ENCODE measurements at regions of chr19 and their contacts with region 1.

Region 1: GRCh38 chr19:42283143-42284065 is 14.4 kb downstream of the CIC start:
- DNase-seq: peak; percentile 90 to 98 (median 97)
- ATAC-seq: peak; percentile 69
- H3K4me3 ChIP-seq: peak overlapping the region; percentile 40 to 59
- H3K4me3 Mint-ChIP-seq: no peak overlapping the region
- H3K27ac ChIP-seq: peak overlapping the region; percentile 85 to 94
- H3K27ac Mint-ChIP-seq: no peak overlapping the region
- H3K4me1 ChIP-seq: peaks cover 47% of the 10 kb centered on the region
- H3K4me1 Mint-ChIP-seq: peaks cover 48% of the 10 kb centered on the region
- H3K27me3 ChIP-seq: no peaks in the 10 kb centered on the region
- H3K27me3 Mint-ChIP-seq: no peaks in the 10 kb centered on the region
- CTCF ChIP-seq: no peak

Region 2: GRCh38 chr19:42176990-42177685 is 106.3 kb before region 1 on chr19:
- CTCF ChIA-PET with region 1: interaction called, 4 read pairs
- POLR2A ChIA-PET with region 1: no interaction called
- intact Hi-C with region 1: loop called (anchors 2 to 5 kb)
- DNase-seq: peak; percentile 52 to 90 (median 74)
- ATAC-seq: peak; percentile 95
- H3K4me3 ChIP-seq: peak overlapping the region; percentile 49 to 50
- H3K4me3 Mint-ChIP-seq: no peak overlapping the region
- H3K27ac ChIP-seq: no peak overlapping the region
- H3K27ac Mint-ChIP-seq: no peak overlapping the region
- H3K4me1 ChIP-seq: peaks cover 17% of the 10 kb centered on the region
- H3K4me1 Mint-ChIP-seq: peaks cover 12% of the 10 kb centered on the region
- H3K27me3 ChIP-seq: peaks cover 0 to 22% of the 10 kb centered on the region in 2 experiments
- H3K27me3 Mint-ChIP-seq: peaks cover 27% of the 10 kb centered on the region
- CTCF ChIP-seq: peak; percentile 43

Region 3: GRCh38 chr19:42219812-42220750 is 63.3 kb before region 1 on chr19 and contains the start of gene ZNF526:
- CTCF ChIA-PET with region 1: interaction called, 8 read pairs
- POLR2A ChIA-PET with region 1: interaction called, 3 read pairs
- intact Hi-C with region 1: loop called (anchors 1 to 2 kb)
- DNase-seq: peak; percentile 94 to 99 (median 96)
- ATAC-seq: peak; percentile 79
- H3K4me3 ChIP-seq: peak within 1 kb of the TSS; percentile 85 to 90
- H3K4me3 Mint-ChIP-seq: peak within 1 kb of the TSS; percentile 96
- H3K27ac ChIP-seq: peak within 1 kb of the TSS; percentile 72 to 73
- H3K27ac Mint-ChIP-seq: peak within 1 kb of the TSS; percentile 95
- H3K4me1 ChIP-seq: peaks cover 42% of the 10 kb centered on the region
- H3K4me1 Mint-ChIP-seq: peaks cover 52% of the 10 kb centered on the region
- H3K27me3 ChIP-seq: no peaks in the 10 kb centered on the region
- H3K27me3 Mint-ChIP-seq: no peaks in the 10 kb centered on the region
- CTCF ChIP-seq: no peak
- total RNA-seq, gene ZNF526: 8.7 to 9.4 TPM

Region 4: GRCh38 chr19:42268704-42269477 is 14.5 kb before region 1 on chr19 and contains the start of gene CIC:
- CTCF ChIA-PET with region 1: interaction called, 20 read pairs
- POLR2A ChIA-PET with region 1: interaction called, 15 read pairs
- intact Hi-C with region 1: loop called (anchors 1 kb)
- DNase-seq: peak; percentile 97 to 100 (median 99)
- ATAC-seq: peak; percentile 70
- H3K4me3 ChIP-seq: peak within 1 kb of the TSS; percentile 70 to 83
- H3K4me3 Mint-ChIP-seq: peak within 1 kb of the TSS; percentile 86
- H3K27ac ChIP-seq: peak within 1 kb of the TSS; percentile 93 to 99
- H3K27ac Mint-ChIP-seq: peak within 1 kb of the TSS; percentile 97
- H3K4me1 ChIP-seq: peaks cover 29% of the 10 kb centered on the region
- H3K4me1 Mint-ChIP-seq: peaks cover 34% of the 10 kb centered on the region
- H3K27me3 ChIP-seq: no peaks in the 10 kb centered on the region
- H3K27me3 Mint-ChIP-seq: no peaks in the 10 kb centered on the region
- CTCF ChIP-seq: no peak
- total RNA-seq, gene CIC: 111 to 112 TPM

Region 5: DNA sequence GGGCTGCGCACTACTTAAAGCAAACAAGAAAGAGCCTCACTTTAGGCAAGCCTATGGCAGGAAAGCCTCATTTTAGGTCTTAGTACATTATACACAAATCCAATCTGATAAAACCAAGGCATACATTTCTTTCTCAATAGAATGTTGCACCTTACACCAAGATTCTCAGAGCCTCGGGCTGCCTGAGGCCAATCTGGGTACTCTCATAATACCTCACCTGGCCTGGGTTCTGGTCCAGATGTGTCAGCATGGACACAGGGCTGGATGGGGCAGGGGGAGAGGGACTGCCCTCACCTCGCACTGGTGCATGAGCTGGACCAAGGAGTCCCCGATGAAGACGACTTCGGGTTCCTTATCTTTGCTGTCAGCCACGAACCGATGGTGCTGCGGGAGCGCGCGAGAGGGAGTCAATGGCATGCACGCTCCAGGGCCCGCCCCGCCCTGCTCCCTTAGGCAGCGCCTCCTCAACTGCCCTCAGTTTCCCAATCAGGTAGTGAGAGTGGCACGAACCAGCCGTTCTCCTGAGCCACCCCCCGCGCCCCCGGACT is 18.3 kb after region 1 on chr19 and contains the start of gene PRR19:
- CTCF ChIA-PET with region 1: interaction called, 8 read pairs
- POLR2A ChIA-PET with region 1: no interaction called
- intact Hi-C with region 1: loop called (anchors 1 kb)
- DNase-seq: peak in 1 of 9 experiments; percentile 46
- ATAC-seq: peak; percentile 5
- H3K4me3 ChIP-seq: peak within 1 kb of the TSS; percentile 88 to 89
- H3K4me3 Mint-ChIP-seq: peak within 1 kb of the TSS; percentile 87
- H3K27ac ChIP-seq: peak within 1 kb of the TSS; percentile 37 to 56
- H3K27ac Mint-ChIP-seq: peak within 1 kb of the TSS; percentile 49
- H3K4me1 ChIP-seq: peaks cover 19% of the 10 kb centered on the region
- H3K4me1 Mint-ChIP-seq: peaks cover 28% of the 10 kb centered on the region
- H3K27me3 ChIP-seq: no peaks in the 10 kb centered on the region
- H3K27me3 Mint-ChIP-seq: no peaks in the 10 kb centered on the region
- CTCF ChIP-seq: no peak
- total RNA-seq, gene PRR19: 0.19 TPM in 1 of 2 experiments, not detected in the other

Measured in CD8-positive, alpha-beta T cell (primary cell).